ENCODE measurements at regions of chr18 and their contacts with region 1.

Region 1: GRCh38 chr18:11676867-11677266 is 12.2 kb upstream of the GNAL start:
- DNase-seq: no peak
- H3K4me3 Mint-ChIP-seq: no peak overlapping the region
- H3K27ac Mint-ChIP-seq: no peak overlapping the region
- H3K4me1 Mint-ChIP-seq: no peaks in the 10 kb centered on the region
- H3K27me3 Mint-ChIP-seq: peaks cover 26% of the 10 kb centered on the region

Region 2: GRCh38 chr18:11134940-11135339 is 541.9 kb before region 1 on chr18:
- CTCF ChIA-PET with region 1: no interaction called
- intact Hi-C with region 1: loop called (anchors 5 kb)
- DNase-seq: no peak
- H3K4me3 Mint-ChIP-seq: no peak overlapping the region
- H3K27ac Mint-ChIP-seq: no peak overlapping the region
- H3K4me1 Mint-ChIP-seq: no peaks in the 10 kb centered on the region
- H3K27me3 Mint-ChIP-seq: peaks cover 3% of the 10 kb centered on the region

Measured in activated naive CD4-positive, alpha-beta T cell treated with anti-CD3 and anti-CD28 coated beads for 36 hours (primary cell).